Endothelial cell of umbilical vein (primary cell): ENCODE measurements at regions of chr9 and their contacts with region 1.

Region 1: DNA sequence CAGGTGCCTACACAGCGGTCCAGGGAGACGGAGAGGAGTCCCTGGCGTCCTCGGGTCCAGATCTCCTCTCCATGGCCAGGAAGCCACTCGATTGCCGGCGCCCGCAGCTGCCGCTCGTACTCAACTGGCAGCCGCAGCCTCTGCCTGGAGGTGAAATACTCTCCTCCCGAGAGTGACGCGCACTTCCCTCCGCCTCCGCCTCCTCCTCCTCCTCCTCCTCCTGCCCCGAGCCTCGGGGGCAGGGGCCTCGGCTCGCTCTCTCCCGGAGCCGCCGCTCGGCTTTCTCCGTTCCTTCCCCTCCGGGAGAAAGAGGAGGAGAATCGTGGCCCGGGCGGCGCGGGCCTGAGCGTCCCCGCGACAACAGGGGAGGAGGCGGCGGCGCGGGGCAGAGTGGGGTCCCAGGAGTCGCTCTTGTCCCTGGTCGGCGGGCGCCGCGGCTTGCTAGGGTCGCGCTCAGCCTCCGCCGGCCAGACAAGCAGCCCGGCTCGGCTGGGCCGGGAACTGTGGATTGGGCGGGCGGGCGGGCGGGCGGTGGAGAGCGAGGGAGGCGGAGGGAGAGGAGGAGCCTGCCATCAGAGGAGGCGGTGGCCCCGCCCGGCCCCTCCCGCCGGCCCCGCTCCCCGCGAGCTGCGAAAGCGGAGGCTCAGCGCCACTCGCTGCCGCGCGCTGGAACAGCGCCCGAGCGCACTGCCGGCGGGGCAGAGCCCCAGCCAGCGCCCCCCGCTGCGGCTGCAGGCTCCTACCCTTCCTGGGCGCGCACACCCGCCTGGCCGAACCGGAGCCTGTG is at the start of gene CEMIP2:
- DNase-seq: peak; percentile 89
- H3K4me3 ChIP-seq: peak within 1 kb of the TSS; percentile 97 to 98 (median 98)
- H3K27ac ChIP-seq: peak within 1 kb of the TSS; percentile 91
- H3K4me1 ChIP-seq: peaks cover 33% of the 10 kb centered on the region
- H3K27me3 ChIP-seq: no peaks in the 10 kb centered on the region
- CTCF ChIP-seq: peak; percentile 41 to 67
- POLR2A ChIP-seq: peak; percentile 98
- total RNA-seq, gene CEMIP2: 44.3 and 47.5 TPM in 2 replicates

Region 2: GRCh38 chr9:70902692-70903131 is 865.9 kb before region 1 on chr9:
- CTCF ChIA-PET with region 1: no interaction called
- POLR2A ChIA-PET with region 1: no interaction called
- dilution Hi-C with region 1: no loop called
- intact Hi-C with region 1: loop called (anchors 5 kb)
- DNase-seq: peak; percentile 87
- H3K4me3 ChIP-seq: peak overlapping the region in 2 of 3 experiments; percentile 20 to 57
- H3K27ac ChIP-seq: peak overlapping the region; percentile 95
- H3K4me1 ChIP-seq: peaks cover 29% of the 10 kb centered on the region
- H3K27me3 ChIP-seq: no peaks in the 10 kb centered on the region
- CTCF ChIP-seq: no peak
- POLR2A ChIP-seq: peak; percentile 61

Region 3: DNA sequence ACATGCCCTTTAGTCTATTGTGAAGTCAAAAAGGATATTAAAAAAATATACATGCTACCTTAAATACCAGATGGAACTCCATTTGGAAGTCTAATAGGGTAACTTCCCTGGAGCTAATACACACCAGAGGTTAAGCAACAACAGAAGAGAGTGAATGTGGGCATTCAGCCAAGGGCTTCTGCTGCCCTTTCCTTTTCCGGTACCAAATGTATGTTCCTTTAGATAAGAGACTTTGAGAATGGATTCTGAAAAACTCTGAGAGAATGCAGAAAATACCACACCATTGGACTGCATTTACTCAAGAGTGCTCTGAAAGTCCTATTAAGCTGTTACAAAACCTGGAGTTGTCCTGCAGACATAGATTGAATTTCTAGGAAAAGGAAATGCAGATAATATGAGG is 623.4 kb before region 1 on chr9:
- CTCF ChIA-PET with region 1: no interaction called
- POLR2A ChIA-PET with region 1: no interaction called
- dilution Hi-C with region 1: no loop called
- intact Hi-C with region 1: loop called (anchors 10 kb)
- DNase-seq: peak; percentile 99
- H3K4me3 ChIP-seq: no peak overlapping the region
- H3K27ac ChIP-seq: peak overlapping the region; percentile 57
- H3K4me1 ChIP-seq: peaks cover 23% of the 10 kb centered on the region
- H3K27me3 ChIP-seq: no peaks in the 10 kb centered on the region
- CTCF ChIP-seq: no peak
- POLR2A ChIP-seq: peak; percentile 24

Region 4: GRCh38 chr9:71446473-71447411 is 321.8 kb before region 1 on chr9:
- CTCF ChIA-PET with region 1: no interaction called
- POLR2A ChIA-PET with region 1: no interaction called
- dilution Hi-C with region 1: no loop called
- intact Hi-C with region 1: loop called (anchors 2 kb)
- DNase-seq: peak; percentile 68
- H3K4me3 ChIP-seq: peak overlapping the region in 2 of 3 experiments; percentile 33 to 34
- H3K27ac ChIP-seq: no peak overlapping the region
- H3K4me1 ChIP-seq: no peaks in the 10 kb centered on the region
- H3K27me3 ChIP-seq: peaks cover 5 to 8% of the 10 kb centered on the region in 2 experiments
- CTCF ChIP-seq: peak in 1 of 2 donors; percentile 21
- POLR2A ChIP-seq: no peak

Region 5: DNA sequence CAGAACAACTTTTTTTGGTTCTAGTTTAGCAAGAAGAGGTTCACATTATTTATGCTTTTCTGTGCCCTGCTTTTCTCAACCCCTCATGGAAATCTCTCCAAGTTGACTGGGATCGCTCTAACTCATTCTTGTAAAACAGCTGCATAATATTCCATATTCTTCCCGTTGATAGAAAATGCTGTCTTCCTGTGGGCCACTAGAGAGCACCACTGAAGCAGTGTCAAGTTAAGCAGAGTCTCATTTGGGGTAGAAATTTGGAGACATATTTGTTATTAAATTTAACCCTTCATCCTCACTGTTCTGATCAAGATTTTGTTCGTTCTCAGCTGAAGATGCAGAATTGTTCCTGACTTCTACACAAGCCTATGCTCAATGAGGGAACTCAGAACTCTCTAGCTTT is 140.3 kb before region 1 on chr9:
- CTCF ChIA-PET with region 1: interaction called, 11 read pairs
- POLR2A ChIA-PET with region 1: no interaction called
- dilution Hi-C with region 1: no loop called
- intact Hi-C with region 1: loop called (anchors 1 kb)
- DNase-seq: no peak
- H3K4me3 ChIP-seq: no peak overlapping the region
- H3K27ac ChIP-seq: no peak overlapping the region
- H3K4me1 ChIP-seq: peaks cover 20% of the 10 kb centered on the region
- H3K27me3 ChIP-seq: no peaks in the 10 kb centered on the region
- CTCF ChIP-seq: no peak
- POLR2A ChIP-seq: no peak

Region 6: GRCh38 chr9:71795097-71795813 is 26.7 kb after region 1 on chr9:
- CTCF ChIA-PET with region 1: no interaction called
- POLR2A ChIA-PET with region 1: no interaction called
- dilution Hi-C with region 1: no loop called
- intact Hi-C with region 1: no loop called
- DNase-seq: no peak
- H3K4me3 ChIP-seq: no peak overlapping the region
- H3K27ac ChIP-seq: no peak overlapping the region
- H3K4me1 ChIP-seq: no peaks in the 10 kb centered on the region
- H3K27me3 ChIP-seq: no peaks in the 10 kb centered on the region
- CTCF ChIP-seq: no peak
- POLR2A ChIP-seq: no peak

Region 7: DNA sequence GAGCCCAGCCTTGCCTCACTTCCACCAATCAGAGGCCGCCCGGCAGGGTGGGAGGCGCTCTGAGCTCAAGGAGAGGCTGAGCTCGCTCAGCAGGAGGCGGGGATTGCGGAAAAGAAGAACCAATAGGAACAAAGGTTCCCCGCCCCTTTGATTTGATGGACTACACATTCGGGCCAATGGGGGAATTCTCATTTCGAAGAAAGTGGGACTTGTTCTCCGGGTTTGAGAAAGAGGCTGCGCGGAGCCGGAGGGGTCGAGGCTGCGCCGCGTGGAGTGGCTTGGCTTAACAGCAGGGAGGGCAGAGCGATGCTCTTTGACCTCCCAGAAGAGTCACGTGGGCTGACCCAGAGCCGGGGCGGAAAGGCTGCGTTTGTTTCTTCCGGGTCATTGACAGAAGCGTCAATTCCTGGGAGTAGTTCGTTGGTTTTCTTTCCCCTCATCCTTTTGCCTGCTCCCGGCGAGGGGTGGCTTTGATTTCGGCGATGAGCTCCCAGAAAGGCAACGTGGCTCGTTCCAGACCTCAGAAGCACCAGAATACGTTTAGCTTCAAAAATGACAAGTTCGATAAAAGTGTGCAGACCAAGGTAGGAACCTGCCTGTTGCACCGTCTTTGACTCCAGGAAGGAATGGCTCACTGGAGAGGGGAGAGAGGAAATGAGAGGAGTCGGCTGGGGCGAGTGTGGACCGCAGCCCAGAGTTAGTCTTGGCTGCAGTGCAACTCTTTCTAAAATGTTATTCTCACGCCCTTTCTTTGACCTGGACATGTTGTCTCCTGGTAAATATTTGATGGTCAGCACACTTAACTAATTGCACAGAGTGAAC is 142.9 kb after region 1 on chr9 and contains the start of gene C9orf85:
- CTCF ChIA-PET with region 1: no interaction called
- POLR2A ChIA-PET with region 1: interaction called, 3 read pairs
- dilution Hi-C with region 1: no loop called
- intact Hi-C with region 1: loop called (anchors 1 kb)
- DNase-seq: peak; percentile 100
- H3K4me3 ChIP-seq: peak within 1 kb of the TSS; percentile 70 to 99 (median 97)
- H3K27ac ChIP-seq: peak within 1 kb of the TSS; percentile 83
- H3K4me1 ChIP-seq: peaks cover 20% of the 10 kb centered on the region
- H3K27me3 ChIP-seq: no peaks in the 10 kb centered on the region
- CTCF ChIP-seq: no peak
- POLR2A ChIP-seq: no peak
- total RNA-seq, gene C9orf85: 10.3 and 11.3 TPM in 2 replicates